ENCODE measurements at regions of chr20 and their contacts with region 1.

Region 1: GRCh38 chr20:44979090-44979621 is 12.8 kb downstream of the STK4 start:
- DNase-seq: peak in 34 of 35 experiments; percentile 12 to 92 (median 62)
- ATAC-seq: peak; percentile 83 to 88 (median 86)
- H3K4me3 ChIP-seq: peak overlapping the region; percentile 39 to 44
- H3K4me3 Mint-ChIP-seq: peak overlapping the region; percentile 71 to 84 (median 76)
- H3K27ac ChIP-seq: peak overlapping the region; percentile 91
- H3K27ac Mint-ChIP-seq: peak overlapping the region; percentile 93 to 98
- H3K4me1 ChIP-seq: peaks cover 47 to 67% of the 10 kb centered on the region in 2 experiments
- H3K4me1 Mint-ChIP-seq: peaks cover 90 to 95% (median 92%) of the 10 kb centered on the region in 3 donors
- H3K27me3 ChIP-seq: no peaks in the 10 kb centered on the region
- H3K27me3 Mint-ChIP-seq: no peaks in the 10 kb centered on the region

Region 2: GRCh38 chr20:44967207-44967807 is 11.8 kb before region 1 on chr20:
- CTCF ChIA-PET with region 1: interaction called, 3 to 17 read pairs
- POLR2A ChIA-PET with region 1: interaction called, 7 to 25 read pairs
- DNase-seq: peak in 24 of 35 experiments; percentile 17 to 72 (median 40)
- ATAC-seq: peak; percentile 41 to 56 (median 46)
- H3K4me3 ChIP-seq: peak overlapping the region; percentile 95 to 98
- H3K4me3 Mint-ChIP-seq: peak overlapping the region; percentile 86 to 99 (median 98)
- H3K27ac ChIP-seq: peak overlapping the region; percentile 84
- H3K27ac Mint-ChIP-seq: peak overlapping the region; percentile 93 to 96
- H3K4me1 ChIP-seq: peaks cover 18% of the 10 kb centered on the region in 2 experiments
- H3K4me1 Mint-ChIP-seq: peaks cover 38 to 68% (median 59%) of the 10 kb centered on the region in 3 donors
- H3K27me3 ChIP-seq: no peaks in the 10 kb centered on the region
- H3K27me3 Mint-ChIP-seq: no peaks in the 10 kb centered on the region